ENCODE measurements at regions of chr1 and their contacts with region 1.

Region 1: DNA sequence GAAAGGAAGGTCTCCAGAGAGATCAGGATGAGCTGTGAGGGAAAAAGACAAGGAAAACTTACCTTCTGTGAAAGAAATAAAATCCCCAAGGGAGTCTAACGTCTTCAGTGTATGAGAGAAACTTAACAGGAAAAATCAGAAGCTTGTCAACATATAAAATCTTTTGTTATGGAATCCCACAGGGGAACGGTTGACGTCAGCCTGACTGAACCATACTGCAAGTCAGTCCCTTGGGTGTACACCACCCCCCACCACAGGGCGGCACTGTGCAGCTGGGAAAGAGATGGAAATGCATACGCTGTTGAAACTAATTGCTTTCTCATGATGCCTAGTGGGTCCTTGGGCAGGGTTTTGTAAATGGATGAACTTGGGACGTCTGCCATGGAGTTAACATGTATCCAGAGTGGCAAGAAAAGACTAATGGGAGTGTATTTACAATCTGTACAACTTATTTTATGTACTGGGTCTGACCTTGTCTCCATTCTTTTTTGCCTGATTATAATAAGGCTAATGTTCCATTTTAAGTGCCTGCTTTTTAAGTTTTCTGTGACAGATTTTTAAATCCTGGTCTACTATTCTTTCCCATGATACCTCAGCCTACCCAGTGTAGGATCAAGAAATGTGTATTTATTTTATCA is 22.7 kb downstream of the UTP25 start:
- DNase-seq: no peak
- H3K4me3 ChIP-seq: no peak overlapping the region
- H3K27me3 ChIP-seq: no peaks in the 10 kb centered on the region
- CTCF ChIP-seq: peak; percentile 81

Region 2: GRCh38 chr1:209733409-209734192 is 116.9 kb before region 1 on chr1:
- CTCF ChIA-PET with region 1: no interaction called
- POLR2A ChIA-PET with region 1: no interaction called
- DNase-seq: no peak
- H3K4me3 ChIP-seq: no peak overlapping the region
- H3K27me3 ChIP-seq: no peaks in the 10 kb centered on the region
- CTCF ChIP-seq: no peak

Region 3: GRCh38 chr1:209839875-209840491 is 10.5 kb before region 1 on chr1:
- CTCF ChIA-PET with region 1: interaction called, 27 read pairs
- POLR2A ChIA-PET with region 1: no interaction called
- DNase-seq: peak; percentile 70
- H3K4me3 ChIP-seq: no peak overlapping the region
- H3K27me3 ChIP-seq: no peaks in the 10 kb centered on the region
- CTCF ChIP-seq: no peak

Measured in BJ (cell line).